ENCODE measurements at regions of chr14 and their contacts with region 1.

Region 1: GRCh38 chr14:91866061-91866460 is 1.3 kb downstream of the TC2N start:
- DNase-seq: peak; percentile 53
- H3K4me3 Mint-ChIP-seq: peak overlapping the region; percentile 94
- H3K27ac Mint-ChIP-seq: peak overlapping the region; percentile 95
- H3K4me1 Mint-ChIP-seq: peaks cover 77% of the 10 kb centered on the region
- H3K27me3 Mint-ChIP-seq: no peaks in the 10 kb centered on the region

Region 2: GRCh38 chr14:91836119-91836881 is 29.8 kb before region 1 on chr14:
- CTCF ChIA-PET with region 1: no interaction called
- POLR2A ChIA-PET with region 1: interaction called, 15 read pairs
- DNase-seq: peak; percentile 83
- H3K4me3 Mint-ChIP-seq: peak overlapping the region; percentile 84
- H3K27ac Mint-ChIP-seq: peak overlapping the region; percentile 26
- H3K4me1 Mint-ChIP-seq: peaks cover 66% of the 10 kb centered on the region
- H3K27me3 Mint-ChIP-seq: peaks cover 7% of the 10 kb centered on the region

Region 3: GRCh38 chr14:91896419-91896818 is 30.4 kb after region 1 on chr14:
- CTCF ChIA-PET with region 1: interaction called, 5 read pairs
- POLR2A ChIA-PET with region 1: interaction called, 11 read pairs
- DNase-seq: no peak
- H3K4me3 Mint-ChIP-seq: no peak overlapping the region
- H3K27ac Mint-ChIP-seq: no peak overlapping the region
- H3K4me1 Mint-ChIP-seq: peaks cover 23% of the 10 kb centered on the region
- H3K27me3 Mint-ChIP-seq: no peaks in the 10 kb centered on the region

Region 4: DNA sequence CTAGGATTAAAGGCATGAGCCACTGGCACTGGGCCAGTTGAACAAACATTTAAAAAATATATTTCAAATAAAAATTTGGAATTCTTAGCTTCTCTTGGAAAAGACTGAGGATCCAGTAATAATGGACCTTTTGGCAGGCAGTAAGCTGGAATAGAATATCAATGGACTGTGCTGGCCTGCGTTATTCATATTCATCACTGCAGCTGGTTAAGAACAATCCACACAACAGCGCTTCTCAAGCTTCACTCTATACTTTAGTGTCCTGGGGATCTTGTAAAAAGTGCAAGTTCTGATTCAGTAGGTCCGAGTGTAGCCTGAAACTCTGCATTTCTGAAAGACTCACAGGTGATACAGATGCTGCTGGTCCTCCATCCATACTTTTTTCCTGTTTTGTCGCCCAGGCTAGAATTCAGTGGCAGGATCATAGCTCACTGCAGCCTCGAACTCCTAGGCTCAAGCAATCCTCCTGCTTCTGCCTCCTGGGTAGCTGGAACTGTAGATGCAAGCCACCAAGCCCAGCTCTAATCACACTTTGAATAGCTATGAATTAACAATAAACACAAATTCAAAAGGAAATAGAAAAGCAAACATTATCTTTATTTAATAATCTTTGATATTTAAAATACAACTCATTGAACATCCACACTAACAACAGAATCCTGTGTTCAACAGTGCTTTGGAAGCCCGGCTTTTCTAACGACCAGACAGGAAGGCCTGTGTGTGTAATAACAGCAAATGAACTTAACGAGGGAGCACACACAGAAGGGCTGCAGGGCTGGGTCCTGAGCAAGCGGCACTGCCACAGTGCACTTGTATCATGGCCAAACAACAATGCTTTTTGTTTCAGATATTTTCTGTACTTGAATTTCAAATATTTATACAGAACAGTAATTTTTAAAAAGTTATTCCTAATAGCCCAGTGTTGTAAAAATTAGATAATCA is 192.2 kb after region 1 on chr14:
- CTCF ChIA-PET with region 1: no interaction called
- POLR2A ChIA-PET with region 1: no interaction called
- DNase-seq: no peak
- H3K4me3 Mint-ChIP-seq: no peak overlapping the region
- H3K27ac Mint-ChIP-seq: no peak overlapping the region
- H3K4me1 Mint-ChIP-seq: no peaks in the 10 kb centered on the region
- H3K27me3 Mint-ChIP-seq: no peaks in the 10 kb centered on the region

Measured in activated CD4-positive, alpha-beta memory T cell treated with anti-CD3 and anti-CD28 coated beads, Interleukin-2, amount 10 ng/mL, durations not matched to agents 7 days and 5 days (primary cell).